ENCODE measurements at regions of chr11 and their contacts with region 1.

Region 1: GRCh38 chr11:35391922-35392813 is 27.2 kb downstream of the SLC1A2 start:
- DNase-seq: peak; percentile 85
- H3K4me3 ChIP-seq: peak overlapping the region in 2 of 4 donors; percentile 15 to 36
- H3K27ac ChIP-seq: no peak overlapping the region
- H3K4me1 ChIP-seq: peaks cover 0 to 17% (median 7%) of the 10 kb centered on the region in 4 donors
- H3K27me3 ChIP-seq: no peaks in the 10 kb centered on the region
- CTCF ChIP-seq: peak; percentile 78 to 91 (median 84)
- EP300 ChIP-seq: peak in 1 of 4 donors; percentile 11
- POLR2A ChIP-seq: no peak

Region 2: GRCh38 chr11:35305670-35306382 is 86.3 kb before region 1 on chr11:
- intact Hi-C with region 1: loop called (anchors 5 kb)
- DNase-seq: no peak
- H3K4me3 ChIP-seq: no peak overlapping the region
- H3K27ac ChIP-seq: no peak overlapping the region
- H3K4me1 ChIP-seq: peaks cover 0 to 23% (median 9%) of the 10 kb centered on the region in 4 donors
- H3K27me3 ChIP-seq: no peaks in the 10 kb centered on the region
- CTCF ChIP-seq: peak; percentile 21 to 45 (median 43)
- EP300 ChIP-seq: no peak
- POLR2A ChIP-seq: no peak

Region 3: GRCh38 chr11:35554491-35555437 is 162.6 kb after region 1 on chr11:
- intact Hi-C with region 1: no loop called
- DNase-seq: no peak
- H3K4me3 ChIP-seq: no peak overlapping the region
- H3K27ac ChIP-seq: peak overlapping the region in 1 of 4 donors; percentile 67
- H3K4me1 ChIP-seq: peaks cover 0 to 39% (median 18%) of the 10 kb centered on the region in 4 donors
- H3K27me3 ChIP-seq: no peaks in the 10 kb centered on the region
- CTCF ChIP-seq: no peak
- EP300 ChIP-seq: no peak
- POLR2A ChIP-seq: no peak